CD8-positive, alpha-beta T cell (primary cell): ENCODE measurements at regions of chr1 and their contacts with region 1.

Region 1: DNA sequence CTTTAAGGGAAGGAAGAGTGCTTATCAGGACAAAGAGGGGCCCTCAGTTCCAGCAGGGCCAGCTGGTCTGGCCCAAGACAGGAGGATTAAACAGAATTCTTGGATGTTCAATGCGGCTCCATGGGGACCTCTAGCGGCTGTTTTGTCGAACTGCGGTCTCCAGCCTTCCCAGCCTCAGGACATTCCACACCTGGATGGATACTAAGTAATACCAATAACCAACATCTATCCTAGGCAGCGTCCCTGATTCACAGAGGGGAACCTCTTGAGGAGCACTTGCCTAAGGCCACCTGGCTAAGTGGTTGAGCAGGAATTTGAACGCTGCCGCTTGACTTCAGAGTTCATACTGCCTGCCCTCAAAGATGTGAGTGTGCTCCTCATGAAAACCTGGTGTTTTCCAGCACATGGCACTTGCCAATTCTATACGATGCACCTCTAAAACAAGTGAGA is 15.5 kb upstream of the CD247 start:
- DNase-seq: peak; percentile 37 to 80 (median 71)
- ATAC-seq: peak; percentile 93
- H3K4me3 ChIP-seq: no peak overlapping the region
- H3K4me3 Mint-ChIP-seq: no peak overlapping the region
- H3K27ac ChIP-seq: no peak overlapping the region
- H3K27ac Mint-ChIP-seq: no peak overlapping the region
- H3K4me1 ChIP-seq: no peaks in the 10 kb centered on the region
- H3K4me1 Mint-ChIP-seq: peaks cover 3% of the 10 kb centered on the region
- H3K27me3 ChIP-seq: no peaks in the 10 kb centered on the region
- H3K27me3 Mint-ChIP-seq: no peaks in the 10 kb centered on the region
- CTCF ChIP-seq: peak; percentile 98

Region 2: GRCh38 chr1:166975361-166976129 is 558.3 kb before region 1 on chr1 and contains the start of gene ILDR2:
- CTCF ChIA-PET with region 1: no interaction called
- POLR2A ChIA-PET with region 1: no interaction called
- intact Hi-C with region 1: loop called in 1 of 2 experiments (anchors 10 kb)
- DNase-seq: peak; percentile 18 to 76 (median 53)
- ATAC-seq: peak; percentile 85
- H3K4me3 ChIP-seq: peak within 1 kb of the TSS; percentile 52 to 68
- H3K4me3 Mint-ChIP-seq: peak within 1 kb of the TSS; percentile 86
- H3K27ac ChIP-seq: peak within 1 kb of the TSS in 1 of 2 experiments; percentile 17
- H3K27ac Mint-ChIP-seq: peak within 1 kb of the TSS; percentile 1
- H3K4me1 ChIP-seq: peaks cover 9% of the 10 kb centered on the region
- H3K4me1 Mint-ChIP-seq: peaks cover 12% of the 10 kb centered on the region
- H3K27me3 ChIP-seq: peaks cover 0 to 14% of the 10 kb centered on the region in 2 experiments
- H3K27me3 Mint-ChIP-seq: peaks cover 22% of the 10 kb centered on the region
- CTCF ChIP-seq: no peak
- total RNA-seq, gene ILDR2: 0.50 to 0.54 TPM

Region 3: DNA sequence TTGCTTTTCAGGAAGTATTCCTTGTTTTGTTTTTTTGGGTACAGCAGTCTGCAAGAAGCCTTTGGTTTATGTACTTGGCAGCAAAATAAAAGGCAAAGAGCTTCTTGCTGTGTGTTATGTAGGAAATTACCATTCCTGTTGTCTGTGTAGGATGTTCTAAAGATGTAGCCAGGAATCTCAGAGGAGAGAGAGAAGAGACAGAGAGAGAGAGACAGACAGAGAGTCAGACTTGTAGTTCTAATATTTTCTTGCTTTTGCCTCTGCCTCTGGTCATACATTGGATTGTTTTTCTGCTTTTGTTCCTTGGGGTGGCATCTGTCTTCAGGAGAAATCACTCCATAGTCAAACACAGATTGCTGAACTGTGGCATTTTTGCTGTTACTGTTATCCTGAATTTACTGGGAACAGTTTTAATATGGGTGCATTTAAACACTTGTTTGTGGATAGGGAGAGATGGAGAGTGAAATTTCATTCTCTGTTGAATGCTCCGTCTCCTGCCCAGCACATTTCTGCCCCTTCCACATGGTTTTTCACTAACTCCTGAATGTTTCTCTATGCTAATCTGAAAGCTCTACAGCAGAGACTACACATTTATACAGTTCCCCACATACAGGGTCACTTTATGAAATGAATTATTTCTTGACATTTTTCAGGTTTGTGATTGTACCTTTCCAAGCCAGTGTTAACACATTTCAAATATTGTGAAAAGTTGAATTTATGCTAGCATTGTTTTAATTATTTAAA is 263.4 kb before region 1 on chr1:
- CTCF ChIA-PET with region 1: interaction called, 72 read pairs
- POLR2A ChIA-PET with region 1: no interaction called
- intact Hi-C with region 1: loop called (anchors 1 kb)
- DNase-seq: no peak
- ATAC-seq: no peak
- H3K4me3 ChIP-seq: no peak overlapping the region
- H3K4me3 Mint-ChIP-seq: no peak overlapping the region
- H3K27ac ChIP-seq: no peak overlapping the region
- H3K27ac Mint-ChIP-seq: no peak overlapping the region
- H3K4me1 ChIP-seq: peaks cover 9% of the 10 kb centered on the region
- H3K4me1 Mint-ChIP-seq: peaks cover 43% of the 10 kb centered on the region
- H3K27me3 ChIP-seq: no peaks in the 10 kb centered on the region
- H3K27me3 Mint-ChIP-seq: no peaks in the 10 kb centered on the region
- CTCF ChIP-seq: no peak

Region 4: GRCh38 chr1:167401260-167401873 is 132.5 kb before region 1 on chr1:
- CTCF ChIA-PET with region 1: interaction called, 69 read pairs
- POLR2A ChIA-PET with region 1: interaction called, 3 read pairs
- intact Hi-C with region 1: loop called (anchors 1 kb)
- DNase-seq: peak; percentile 4 to 79 (median 51)
- ATAC-seq: peak; percentile 73
- H3K4me3 ChIP-seq: no peak overlapping the region
- H3K4me3 Mint-ChIP-seq: no peak overlapping the region
- H3K27ac ChIP-seq: no peak overlapping the region
- H3K27ac Mint-ChIP-seq: no peak overlapping the region
- H3K4me1 ChIP-seq: no peaks in the 10 kb centered on the region
- H3K4me1 Mint-ChIP-seq: peaks cover 5% of the 10 kb centered on the region
- H3K27me3 ChIP-seq: no peaks in the 10 kb centered on the region
- H3K27me3 Mint-ChIP-seq: no peaks in the 10 kb centered on the region
- CTCF ChIP-seq: peak; percentile 36

Region 5: GRCh38 chr1:167442124-167442848 is 91.6 kb before region 1 on chr1:
- CTCF ChIA-PET with region 1: interaction called, 58 read pairs
- POLR2A ChIA-PET with region 1: no interaction called
- intact Hi-C with region 1: loop called in 1 of 2 experiments (anchors 2 kb)
- DNase-seq: peak; percentile 78 to 91 (median 89)
- ATAC-seq: peak; percentile 80
- H3K4me3 ChIP-seq: no peak overlapping the region
- H3K4me3 Mint-ChIP-seq: no peak overlapping the region
- H3K27ac ChIP-seq: peak overlapping the region in 1 of 2 experiments; percentile 71
- H3K27ac Mint-ChIP-seq: peak overlapping the region; percentile 85
- H3K4me1 ChIP-seq: peaks cover 81% of the 10 kb centered on the region
- H3K4me1 Mint-ChIP-seq: peaks cover 91% of the 10 kb centered on the region
- H3K27me3 ChIP-seq: no peaks in the 10 kb centered on the region
- H3K27me3 Mint-ChIP-seq: no peaks in the 10 kb centered on the region
- CTCF ChIP-seq: peak; percentile 75

Region 6: DNA sequence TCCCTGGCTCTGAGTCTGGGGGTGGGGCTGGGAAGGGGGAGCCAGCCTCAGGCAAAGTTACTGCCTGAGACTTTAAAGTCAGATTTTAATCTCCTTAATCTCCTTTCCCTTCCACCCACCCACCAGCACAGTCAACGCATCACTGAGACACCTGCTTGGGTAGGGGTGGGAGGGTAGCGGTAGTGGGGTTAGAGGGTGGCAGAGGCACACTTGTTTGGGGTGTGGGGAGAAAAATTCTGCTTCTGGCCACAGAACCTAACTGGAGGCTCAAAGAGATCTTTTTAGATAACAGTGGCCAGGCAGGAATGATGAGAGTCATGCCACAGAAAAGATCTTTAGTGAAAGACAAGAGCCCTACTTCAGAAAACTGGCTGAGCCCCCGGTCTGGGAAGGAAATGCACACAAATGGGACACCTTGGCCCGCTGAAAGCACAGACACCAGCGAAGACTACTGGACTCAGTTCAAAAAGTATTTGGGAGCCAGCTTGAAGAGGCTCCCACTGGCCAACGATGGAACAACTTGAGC is 59.6 kb before region 1 on chr1:
- CTCF ChIA-PET with region 1: interaction called, 14 read pairs
- POLR2A ChIA-PET with region 1: no interaction called
- intact Hi-C with region 1: no loop called
- DNase-seq: peak in 6 of 9 experiments; percentile 43 to 76 (median 60)
- ATAC-seq: peak; percentile 82
- H3K4me3 ChIP-seq: peak overlapping the region; percentile 5 to 15
- H3K4me3 Mint-ChIP-seq: peak overlapping the region; percentile 78
- H3K27ac ChIP-seq: peak overlapping the region in 1 of 2 experiments; percentile 76
- H3K27ac Mint-ChIP-seq: peak overlapping the region; percentile 91
- H3K4me1 ChIP-seq: peaks cover 72% of the 10 kb centered on the region
- H3K4me1 Mint-ChIP-seq: peaks cover 91% of the 10 kb centered on the region
- H3K27me3 ChIP-seq: no peaks in the 10 kb centered on the region
- H3K27me3 Mint-ChIP-seq: no peaks in the 10 kb centered on the region
- CTCF ChIP-seq: no peak

Region 7: DNA sequence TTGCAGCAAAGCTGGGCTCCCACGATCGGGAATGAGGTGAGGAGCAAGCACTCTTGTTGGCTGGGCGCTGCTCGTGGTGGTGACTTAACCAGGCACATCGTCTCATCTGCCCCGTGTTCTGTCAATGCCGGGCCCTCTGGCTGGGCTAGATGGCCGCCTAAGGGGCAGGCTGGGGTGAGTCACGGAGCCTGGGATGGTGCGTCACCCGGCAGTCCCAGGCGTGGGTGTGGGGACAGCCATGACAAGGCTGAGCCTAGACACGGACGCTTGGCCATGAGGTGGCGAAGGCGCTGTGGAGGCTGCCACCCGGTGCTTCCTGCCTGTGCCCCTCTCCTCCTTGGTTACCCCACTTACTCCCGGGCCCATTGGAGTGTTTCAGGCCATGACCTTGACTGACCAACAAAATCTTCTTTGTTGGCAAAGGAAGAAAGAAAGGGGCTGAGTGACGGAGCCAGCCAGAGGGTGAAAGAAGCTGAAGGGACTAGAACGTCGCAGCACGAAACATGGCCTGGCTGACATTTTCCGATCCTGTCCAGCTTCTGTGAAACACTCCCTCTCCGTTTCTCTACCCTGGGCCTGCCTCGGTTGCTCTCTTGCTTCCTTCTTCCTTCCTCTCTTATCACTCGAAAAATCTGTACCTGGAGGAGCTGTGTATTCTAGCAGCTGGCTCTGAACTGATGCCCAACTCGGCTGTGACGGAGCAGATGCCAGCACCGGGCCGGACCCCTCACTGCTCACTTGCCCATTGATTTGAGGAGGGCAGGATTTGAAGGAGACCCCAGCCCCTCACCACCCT is 16.1 kb before region 1 on chr1:
- CTCF ChIA-PET with region 1: interaction called, 76 read pairs
- POLR2A ChIA-PET with region 1: interaction called, 4 read pairs
- intact Hi-C with region 1: loop called in 1 of 2 experiments (anchors 1 kb)
- DNase-seq: peak; percentile 56 to 92 (median 86)
- ATAC-seq: peak; percentile 75
- H3K4me3 ChIP-seq: peak overlapping the region; percentile 94 to 98
- H3K4me3 Mint-ChIP-seq: peak overlapping the region; percentile 99
- H3K27ac ChIP-seq: peak overlapping the region; percentile 94 to 95
- H3K27ac Mint-ChIP-seq: peak overlapping the region; percentile 100
- H3K4me1 ChIP-seq: peaks cover 40% of the 10 kb centered on the region
- H3K4me1 Mint-ChIP-seq: peaks cover 51% of the 10 kb centered on the region
- H3K27me3 ChIP-seq: no peaks in the 10 kb centered on the region
- H3K27me3 Mint-ChIP-seq: no peaks in the 10 kb centered on the region
- CTCF ChIP-seq: no peak